ENCODE measurements at regions of chr3 and their contacts with region 1.

Region 1: GRCh38 chr3:172332256-172333041 is 115.8 kb downstream of the GHSR start:
- DNase-seq: peak; percentile 63
- ATAC-seq: peak; percentile 79
- H3K4me3 Mint-ChIP-seq: no peak overlapping the region
- H3K27ac Mint-ChIP-seq: no peak overlapping the region
- H3K4me1 Mint-ChIP-seq: no peaks in the 10 kb centered on the region
- H3K27me3 Mint-ChIP-seq: no peaks in the 10 kb centered on the region
- CTCF ChIP-seq: peak; percentile 86

Region 2: DNA sequence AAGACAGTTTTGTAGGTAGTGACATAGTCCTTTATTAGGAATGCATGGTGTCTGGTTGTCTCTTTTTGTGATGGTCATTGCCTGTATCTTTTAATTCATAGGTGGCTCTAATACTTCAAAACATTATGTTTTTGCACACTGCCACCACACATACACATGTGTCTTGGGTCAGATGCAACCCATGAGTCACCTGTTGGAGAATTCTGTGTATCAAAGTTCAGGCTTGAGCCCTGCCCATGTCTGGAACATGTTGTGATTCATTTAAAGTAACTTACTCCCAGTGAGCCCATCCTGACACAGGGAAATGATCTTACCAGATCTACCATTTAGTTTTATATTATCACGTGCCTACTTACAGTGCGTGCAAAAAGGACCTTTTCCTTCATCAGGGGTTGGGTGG is 26.9 kb before region 1 on chr3:
- CTCF ChIA-PET with region 1: interaction called, 11 read pairs
- POLR2A ChIA-PET with region 1: no interaction called
- intact Hi-C with region 1: no loop called
- DNase-seq: no peak
- ATAC-seq: no peak
- H3K4me3 Mint-ChIP-seq: no peak overlapping the region
- H3K27ac Mint-ChIP-seq: no peak overlapping the region
- H3K4me1 Mint-ChIP-seq: no peaks in the 10 kb centered on the region
- H3K27me3 Mint-ChIP-seq: no peaks in the 10 kb centered on the region
- CTCF ChIP-seq: no peak

Region 3: DNA sequence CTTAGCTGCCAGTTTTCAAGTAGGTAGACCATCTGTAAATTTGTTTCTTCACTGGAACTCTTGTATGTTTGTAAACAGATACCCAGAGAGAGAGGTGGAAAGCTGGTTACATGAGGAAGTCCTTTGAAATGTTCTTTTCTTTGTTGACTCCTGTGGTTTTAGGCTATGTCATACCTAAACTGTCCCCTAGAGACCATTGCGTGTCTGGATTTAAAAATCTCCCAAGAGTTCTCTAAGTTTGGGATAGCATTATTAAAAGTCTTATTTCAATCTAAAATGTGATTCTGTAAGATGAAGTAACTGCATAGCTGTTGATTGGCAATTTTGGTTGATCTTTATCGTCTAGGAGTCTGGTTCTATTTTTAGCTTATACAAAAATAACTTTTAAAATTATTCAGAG is 11.4 kb before region 1 on chr3:
- CTCF ChIA-PET with region 1: interaction called, 24 read pairs
- POLR2A ChIA-PET with region 1: no interaction called
- intact Hi-C with region 1: no loop called
- DNase-seq: no peak
- ATAC-seq: no peak
- H3K4me3 Mint-ChIP-seq: no peak overlapping the region
- H3K27ac Mint-ChIP-seq: no peak overlapping the region
- H3K4me1 Mint-ChIP-seq: peaks cover 14% of the 10 kb centered on the region
- H3K27me3 Mint-ChIP-seq: no peaks in the 10 kb centered on the region
- CTCF ChIP-seq: no peak

Region 4: DNA sequence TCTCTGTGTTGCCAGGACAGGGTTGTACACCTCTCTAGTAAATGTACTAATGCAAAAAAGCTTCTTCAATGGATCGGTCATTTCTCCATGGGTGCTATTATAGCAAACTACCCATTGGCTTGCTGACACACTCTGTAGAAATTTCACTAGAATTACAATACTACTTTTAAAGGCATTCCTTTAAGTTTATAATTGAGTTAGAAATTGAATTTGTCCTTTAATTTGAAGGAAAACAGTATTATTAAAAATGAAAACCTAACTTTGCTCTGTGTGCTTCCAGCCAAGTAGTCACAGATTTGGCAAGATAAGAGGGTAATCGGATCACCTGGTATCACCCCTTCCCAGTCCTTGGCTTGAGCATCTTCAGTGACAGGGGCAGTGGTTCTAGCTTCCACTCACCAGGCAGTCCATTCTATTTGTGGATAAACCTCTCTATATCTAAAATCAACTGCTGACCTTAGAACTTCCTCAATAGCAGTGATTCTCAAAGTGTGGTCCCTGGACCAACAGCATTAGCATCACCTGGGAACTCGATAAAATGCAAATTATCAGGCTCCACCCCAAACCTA is 22.6 kb after region 1 on chr3:
- CTCF ChIA-PET with region 1: interaction called, 21 read pairs
- POLR2A ChIA-PET with region 1: no interaction called
- intact Hi-C with region 1: no loop called
- DNase-seq: no peak
- ATAC-seq: no peak
- H3K4me3 Mint-ChIP-seq: no peak overlapping the region
- H3K27ac Mint-ChIP-seq: no peak overlapping the region
- H3K4me1 Mint-ChIP-seq: no peaks in the 10 kb centered on the region
- H3K27me3 Mint-ChIP-seq: no peaks in the 10 kb centered on the region
- CTCF ChIP-seq: no peak

Region 5: DNA sequence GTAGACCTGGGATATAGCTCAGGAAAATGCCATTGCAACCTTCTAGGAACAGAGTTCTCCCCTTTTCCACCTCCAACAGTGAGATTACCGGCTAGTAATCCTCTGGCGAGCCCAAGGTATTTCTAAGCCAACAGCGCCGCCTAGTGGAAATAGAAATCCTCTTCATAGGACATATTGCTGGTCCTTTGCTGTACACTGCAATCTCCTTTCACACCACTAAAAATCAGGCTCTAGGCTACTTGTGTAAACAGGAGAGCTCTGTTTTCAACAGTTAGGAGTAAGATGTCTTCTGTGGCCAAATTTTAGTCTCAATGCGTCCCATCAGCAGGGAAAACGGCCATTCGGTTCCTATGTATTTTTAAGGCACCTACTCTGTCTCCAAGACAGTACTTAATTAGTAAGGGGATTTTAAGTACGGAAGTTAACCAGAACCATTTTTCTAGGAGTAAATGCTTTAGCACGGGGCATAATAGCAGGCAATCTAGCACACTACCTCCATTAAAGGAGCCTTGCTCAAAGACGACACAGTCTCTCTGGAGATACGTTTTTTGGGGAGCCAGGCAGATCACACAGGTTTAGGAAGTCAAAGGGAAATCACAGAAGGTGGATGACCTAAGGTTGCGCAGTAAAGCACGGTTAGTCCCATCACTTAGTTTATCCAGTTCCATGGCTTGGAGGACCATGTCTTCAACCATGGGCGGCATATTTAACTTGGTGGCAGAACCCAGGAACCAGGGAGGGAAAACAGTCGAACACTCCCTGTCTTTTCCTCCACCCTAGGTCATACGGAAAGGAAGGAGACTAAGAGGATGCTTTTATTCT is 334.6 kb after region 1 on chr3:
- CTCF ChIA-PET with region 1: interaction called, 48 read pairs
- POLR2A ChIA-PET with region 1: interaction called, 3 read pairs
- intact Hi-C with region 1: loop called (anchors 5 kb)
- DNase-seq: peak; percentile 87
- ATAC-seq: peak; percentile 94
- H3K4me3 Mint-ChIP-seq: no peak overlapping the region
- H3K27ac Mint-ChIP-seq: no peak overlapping the region
- H3K4me1 Mint-ChIP-seq: peaks cover 14% of the 10 kb centered on the region
- H3K27me3 Mint-ChIP-seq: no peaks in the 10 kb centered on the region
- CTCF ChIP-seq: peak; percentile 69

Region 6: GRCh38 chr3:172892158-172892557 is 559.7 kb after region 1 on chr3:
- CTCF ChIA-PET with region 1: no interaction called
- POLR2A ChIA-PET with region 1: no interaction called
- intact Hi-C with region 1: no loop called
- DNase-seq: no peak
- ATAC-seq: no peak
- H3K4me3 Mint-ChIP-seq: no peak overlapping the region
- H3K27ac Mint-ChIP-seq: no peak overlapping the region
- H3K4me1 Mint-ChIP-seq: no peaks in the 10 kb centered on the region
- H3K27me3 Mint-ChIP-seq: peaks cover 3% of the 10 kb centered on the region
- CTCF ChIP-seq: no peak

Measured in activated CD8-positive, alpha-beta T cell treated with anti-CD3 and anti-CD28 coated beads for 36 hours (primary cell).